ENCODE measurements at regions of chr15 and their contacts with region 1.

Region 1: DNA sequence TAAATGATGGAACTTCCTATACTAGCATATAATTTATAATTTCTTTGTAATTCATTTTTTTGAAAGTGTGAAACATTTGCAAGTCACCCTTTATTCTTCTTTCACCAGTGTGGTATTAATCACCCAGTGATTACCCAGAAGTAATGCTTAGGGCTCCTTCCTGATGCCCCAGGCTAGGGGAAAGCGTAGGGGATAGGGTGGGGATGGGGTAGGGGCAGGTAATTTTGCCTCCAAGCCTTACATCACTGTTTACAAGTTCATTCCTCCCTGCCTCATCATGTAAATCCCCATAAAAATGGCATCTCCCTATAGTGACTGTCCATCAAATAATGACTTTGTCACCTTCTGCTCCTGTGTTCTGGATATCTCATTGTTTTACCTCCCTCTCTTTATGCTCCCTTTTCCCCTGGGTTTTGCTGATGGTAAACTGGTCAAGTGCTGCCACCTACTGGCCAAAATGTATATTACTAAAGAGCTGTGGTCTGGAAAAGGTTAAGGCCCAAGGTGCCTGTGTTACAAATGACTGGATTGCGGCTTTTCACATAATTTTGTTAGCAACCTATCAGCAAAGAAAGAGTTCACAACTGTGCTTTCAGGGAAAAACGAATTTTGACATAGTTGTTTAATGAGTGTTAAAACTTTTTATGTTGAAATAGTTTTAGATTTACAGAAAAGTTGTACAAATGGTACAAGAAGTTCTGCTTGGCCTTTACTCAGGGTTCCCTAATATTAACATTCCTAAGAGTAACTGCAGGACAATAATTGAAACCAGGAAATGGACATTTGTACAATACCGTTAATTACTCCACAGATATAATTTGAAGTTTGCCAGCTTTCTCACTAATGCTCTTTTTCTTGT is 54.7 kb downstream of the ONECUT1 start:
- DNase-seq: peak; percentile 68
- H3K4me3 Mint-ChIP-seq: no peak overlapping the region
- H3K27ac Mint-ChIP-seq: no peak overlapping the region
- H3K4me1 Mint-ChIP-seq: peaks cover 30% of the 10 kb centered on the region
- H3K27me3 Mint-ChIP-seq: peaks cover 8% of the 10 kb centered on the region

Region 2: GRCh38 chr15:52256366-52256765 is 479.1 kb before region 1 on chr15:
- intact Hi-C with region 1: loop called (anchors 1 kb)
- DNase-seq: peak; percentile 62
- H3K4me3 Mint-ChIP-seq: peak overlapping the region; percentile 47
- H3K27ac Mint-ChIP-seq: peak overlapping the region; percentile 82
- H3K4me1 Mint-ChIP-seq: peaks cover 28% of the 10 kb centered on the region
- H3K27me3 Mint-ChIP-seq: no peaks in the 10 kb centered on the region

Region 3: DNA sequence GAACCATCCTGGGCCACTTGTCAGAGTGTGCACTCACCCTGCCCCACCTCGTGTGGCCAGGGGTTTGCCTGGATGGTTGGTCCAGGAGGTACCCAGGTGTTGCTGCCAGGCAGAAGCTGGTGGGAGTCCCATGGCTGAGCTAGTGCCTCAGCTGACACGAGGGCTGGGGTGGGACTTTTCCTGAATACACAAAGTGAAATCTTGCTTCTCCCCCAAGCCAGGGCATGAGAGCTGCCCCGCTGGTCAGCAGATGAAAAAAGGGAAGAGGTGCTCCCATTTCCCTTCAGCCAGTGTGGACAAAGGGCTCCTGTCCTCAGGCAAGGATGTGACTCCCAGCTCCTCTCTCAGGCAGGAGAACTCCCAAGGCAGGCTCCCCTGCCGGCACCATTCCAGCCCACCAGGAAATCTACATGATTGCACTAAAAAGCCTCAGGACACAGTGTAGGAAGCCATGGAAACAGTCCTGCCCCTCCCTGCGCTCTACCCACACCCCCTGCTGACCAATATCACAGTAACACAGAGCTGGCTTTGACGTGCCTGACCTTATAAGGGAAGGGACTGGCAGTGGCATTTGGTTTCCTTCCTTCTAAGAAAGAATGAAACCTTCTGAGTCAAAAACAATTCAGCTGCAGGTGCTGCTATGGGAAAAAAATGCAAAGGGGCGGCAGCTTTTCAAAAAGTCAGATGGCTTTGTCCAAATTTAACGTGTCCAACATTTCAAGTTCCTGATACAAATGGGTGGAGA is 473.8 kb before region 1 on chr15:
- intact Hi-C with region 1: loop called (anchors 1 kb)
- DNase-seq: peak; percentile 63
- H3K4me3 Mint-ChIP-seq: peak overlapping the region; percentile 68
- H3K27ac Mint-ChIP-seq: peak overlapping the region; percentile 90
- H3K4me1 Mint-ChIP-seq: peaks cover 44% of the 10 kb centered on the region
- H3K27me3 Mint-ChIP-seq: no peaks in the 10 kb centered on the region

Region 4: GRCh38 chr15:52466134-52466701 is 269.2 kb before region 1 on chr15:
- intact Hi-C with region 1: loop called (anchors 10 kb)
- DNase-seq: peak; percentile 44
- H3K4me3 Mint-ChIP-seq: no peak overlapping the region
- H3K27ac Mint-ChIP-seq: no peak overlapping the region
- H3K4me1 Mint-ChIP-seq: peaks cover 52% of the 10 kb centered on the region
- H3K27me3 Mint-ChIP-seq: no peaks in the 10 kb centered on the region

Region 5: GRCh38 chr15:52528991-52529926 is 206.2 kb before region 1 on chr15:
- intact Hi-C with region 1: loop called (anchors 2 kb)
- DNase-seq: peak; percentile 76
- H3K4me3 Mint-ChIP-seq: peak overlapping the region; percentile 77
- H3K27ac Mint-ChIP-seq: peak overlapping the region; percentile 75
- H3K4me1 Mint-ChIP-seq: peaks cover 29% of the 10 kb centered on the region
- H3K27me3 Mint-ChIP-seq: peaks cover 16% of the 10 kb centered on the region

Region 6: GRCh38 chr15:52568601-52569256 is 166.7 kb before region 1 on chr15 and contains the start of gene ARPP19:
- intact Hi-C with region 1: loop called (anchors 2 kb)
- DNase-seq: peak; percentile 75
- H3K4me3 Mint-ChIP-seq: peak within 1 kb of the TSS; percentile 92
- H3K27ac Mint-ChIP-seq: peak within 1 kb of the TSS; percentile 99
- H3K4me1 Mint-ChIP-seq: peaks cover 43% of the 10 kb centered on the region
- H3K27me3 Mint-ChIP-seq: peaks cover 2% of the 10 kb centered on the region
- total RNA-seq, gene ARPP19: 195 and 216 TPM in 2 replicates

Region 7: DNA sequence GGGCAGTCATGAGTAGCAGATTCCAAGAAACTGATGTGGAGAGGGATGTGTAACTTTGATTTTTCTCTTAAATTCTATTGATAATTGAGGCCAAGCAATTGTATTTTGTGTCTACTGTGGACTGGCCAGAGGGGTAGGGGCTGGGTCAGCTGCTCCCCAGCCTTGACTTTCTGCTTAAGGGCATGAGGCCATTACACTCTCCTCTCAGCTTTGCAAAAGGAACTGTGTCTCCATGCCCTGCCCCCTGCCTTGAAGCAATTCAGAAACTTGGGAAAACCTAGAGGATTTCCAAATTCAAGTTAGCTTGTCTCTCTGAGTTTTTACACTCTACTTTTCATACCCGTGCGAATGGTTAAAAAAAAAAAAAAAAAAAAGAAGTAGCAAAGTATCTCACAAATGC is 16.1 kb after region 1 on chr15:
- intact Hi-C with region 1: no loop called
- DNase-seq: no peak
- H3K4me3 Mint-ChIP-seq: no peak overlapping the region
- H3K27ac Mint-ChIP-seq: no peak overlapping the region
- H3K4me1 Mint-ChIP-seq: no peaks in the 10 kb centered on the region
- H3K27me3 Mint-ChIP-seq: peaks cover 45% of the 10 kb centered on the region